WTC11 (cell line): ENCODE measurements at regions of chr7 and their contacts with region 1.

Region 1: DNA sequence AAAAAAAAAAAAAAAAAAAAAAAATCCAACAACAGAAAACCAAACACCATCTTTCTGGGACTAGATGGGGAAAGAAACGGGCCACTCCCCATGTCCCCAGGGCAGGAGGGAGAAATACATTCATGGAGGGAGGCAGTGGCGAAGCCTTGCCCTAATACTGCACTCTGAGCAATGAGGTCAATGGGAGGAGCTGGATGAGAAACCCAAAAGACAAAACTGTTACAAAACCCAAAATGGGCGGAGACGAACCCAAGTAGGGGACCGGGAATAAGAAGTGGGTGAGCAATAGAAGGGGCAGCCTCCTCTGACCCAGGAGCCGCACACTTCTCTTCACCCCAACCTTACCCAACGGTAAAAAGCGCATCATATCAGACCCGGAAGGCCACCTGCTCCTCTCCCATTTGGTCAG is 6.6 kb downstream of the GNB2 start:
- DNase-seq: no peak
- ATAC-seq: no peak
- H3K4me3 Mint-ChIP-seq: no peak overlapping the region
- H3K27ac Mint-ChIP-seq: peak overlapping the region; percentile 62; the same call in 1 of the 2 replicates
- H3K4me1 Mint-ChIP-seq: peaks cover 11% of the 10 kb centered on the region
- H3K27me3 Mint-ChIP-seq: no peaks in the 10 kb centered on the region
- CTCF ChIP-seq: no peak

Region 2: GRCh38 chr7:100575203-100575631 is 105.0 kb before region 1 on chr7:
- CTCF ChIA-PET with region 1: no interaction called
- POLR2A ChIA-PET with region 1: no interaction called
- DNase-seq: no peak
- ATAC-seq: no peak
- H3K4me3 Mint-ChIP-seq: no peak overlapping the region
- H3K27ac Mint-ChIP-seq: no peak overlapping the region
- H3K4me1 Mint-ChIP-seq: peaks cover 18% of the 10 kb centered on the region
- H3K27me3 Mint-ChIP-seq: peaks cover 11% of the 10 kb centered on the region
- CTCF ChIP-seq: no peak

Region 3: GRCh38 chr7:100642534-100642907 is 37.6 kb before region 1 on chr7:
- CTCF ChIA-PET with region 1: interaction called, 4 read pairs
- POLR2A ChIA-PET with region 1: interaction called, 10 read pairs
- DNase-seq: peak; percentile 80
- ATAC-seq: peak; percentile 90
- H3K4me3 Mint-ChIP-seq: no peak overlapping the region
- H3K27ac Mint-ChIP-seq: no peak overlapping the region
- H3K4me1 Mint-ChIP-seq: peaks cover 14% of the 10 kb centered on the region
- H3K27me3 Mint-ChIP-seq: peaks cover under 1% of the 10 kb centered on the region; the same call in 1 of the 2 replicates
- CTCF ChIP-seq: no peak

Region 4: DNA sequence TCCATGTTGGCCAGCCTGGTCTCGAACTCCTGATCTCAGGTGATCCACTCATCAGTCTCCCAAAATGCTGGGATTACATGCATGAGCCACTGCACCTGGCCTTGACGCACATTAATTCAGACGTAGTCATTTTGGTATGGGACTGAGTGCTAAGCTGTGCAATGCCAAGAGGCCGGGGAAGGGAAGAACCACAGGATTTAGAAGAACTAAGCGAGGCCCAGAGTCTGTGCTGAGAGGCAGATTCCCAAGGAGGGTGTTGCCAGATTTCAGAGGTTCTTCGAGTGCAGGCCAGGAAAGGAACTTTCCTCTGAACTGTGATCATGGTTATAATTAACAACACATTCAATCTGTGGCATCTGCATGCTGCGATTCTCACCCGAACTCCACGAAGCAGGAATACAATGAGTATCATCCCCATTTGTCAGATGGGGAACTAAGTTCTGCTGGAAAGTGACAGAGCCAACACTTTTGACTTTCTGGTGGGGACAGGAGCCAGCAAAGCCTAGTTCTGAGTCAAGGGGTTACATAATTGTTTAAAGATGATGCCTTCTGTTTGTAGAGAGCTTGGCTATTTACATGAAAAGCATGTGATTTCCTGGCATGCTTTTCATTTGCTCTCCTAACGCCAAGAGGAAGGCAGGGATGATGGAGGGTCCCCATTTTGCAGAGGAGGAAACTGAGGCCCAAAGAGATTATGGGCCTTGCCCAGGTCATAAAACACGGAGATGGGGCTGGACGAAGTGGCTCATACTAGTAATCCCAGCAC is 47.0 kb after region 1 on chr7:
- CTCF ChIA-PET with region 1: no interaction called
- POLR2A ChIA-PET with region 1: no interaction called
- DNase-seq: no peak
- ATAC-seq: no peak
- H3K4me3 Mint-ChIP-seq: no peak overlapping the region
- H3K27ac Mint-ChIP-seq: no peak overlapping the region
- H3K4me1 Mint-ChIP-seq: peaks cover 3% of the 10 kb centered on the region; the same call in 1 of the 2 replicates
- H3K27me3 Mint-ChIP-seq: peaks cover 14% of the 10 kb centered on the region
- CTCF ChIP-seq: no peak